Ovary (tissue), 10 donors: ENCODE measurements at regions of chr4 and their contacts with region 1.

Region 1: DNA sequence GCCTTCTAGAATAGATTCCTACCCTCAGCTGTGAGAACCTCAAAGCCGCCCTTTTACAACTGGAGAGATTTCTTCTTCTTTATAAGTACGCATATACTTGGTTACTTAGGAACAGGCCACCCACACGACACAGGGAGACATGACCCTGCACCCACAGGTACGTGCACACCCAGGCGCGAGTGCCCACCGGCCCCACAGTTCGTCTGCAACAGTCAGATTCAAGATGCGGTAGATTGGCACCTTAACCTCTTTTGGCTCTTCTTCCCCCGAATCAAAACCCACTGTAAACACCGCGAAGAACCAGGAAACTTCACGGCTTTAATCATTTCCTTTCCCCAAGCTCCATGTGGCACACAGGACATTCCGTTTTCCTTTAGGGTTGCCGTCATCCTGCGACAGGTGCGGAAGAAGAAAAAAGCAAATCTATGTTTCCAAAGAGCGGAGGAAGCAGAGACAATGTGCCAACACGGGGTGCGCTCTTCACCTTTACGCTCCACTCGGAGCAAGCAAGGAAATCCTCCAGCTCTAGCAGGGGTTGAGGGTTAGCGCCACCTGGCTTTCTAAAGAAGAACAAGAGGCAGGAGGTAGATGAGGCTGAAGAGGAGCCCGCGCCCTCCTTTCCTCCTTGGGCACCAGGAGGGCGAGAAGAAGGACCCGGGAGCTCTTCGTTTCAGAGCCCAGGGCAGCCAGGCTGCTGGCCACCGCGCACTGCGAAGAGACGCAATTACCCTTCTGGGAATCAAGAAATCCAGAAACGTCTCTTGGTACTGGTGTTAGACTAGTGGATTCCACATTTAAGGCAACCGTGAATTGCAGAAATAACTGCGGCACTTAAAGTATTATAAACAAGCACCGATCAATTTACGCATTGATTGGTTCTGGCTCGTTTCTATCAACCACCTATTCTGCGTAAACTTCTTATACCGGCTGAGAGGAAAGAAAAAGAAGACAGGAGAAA is 35.7 kb downstream of the HAND2 start:
- DNase-seq: peak in 4 of 5 donors; percentile 34 to 62 (median 51)
- H3K4me3 ChIP-seq: peak overlapping the region; percentile 41
- H3K27ac ChIP-seq: no peak overlapping the region
- H3K4me1 ChIP-seq: peaks cover 7% of the 10 kb centered on the region
- H3K27me3 ChIP-seq: no peaks in the 10 kb centered on the region
- CTCF ChIP-seq: peak; percentile 43 to 64 (median 49)
- EP300 ChIP-seq: no peak
- POLR2A ChIP-seq: no peak

Region 2: GRCh38 chr4:173413036-173413435 is 81.3 kb before region 1 on chr4:
- intact Hi-C with region 1: loop called in 2 of 4 experiments (anchors 5 to 10 kb)
- DNase-seq: no peak
- H3K4me3 ChIP-seq: no peak overlapping the region
- H3K27ac ChIP-seq: no peak overlapping the region
- H3K4me1 ChIP-seq: no peaks in the 10 kb centered on the region
- H3K27me3 ChIP-seq: no peaks in the 10 kb centered on the region
- CTCF ChIP-seq: no peak
- EP300 ChIP-seq: no peak
- POLR2A ChIP-seq: no peak

Region 3: DNA sequence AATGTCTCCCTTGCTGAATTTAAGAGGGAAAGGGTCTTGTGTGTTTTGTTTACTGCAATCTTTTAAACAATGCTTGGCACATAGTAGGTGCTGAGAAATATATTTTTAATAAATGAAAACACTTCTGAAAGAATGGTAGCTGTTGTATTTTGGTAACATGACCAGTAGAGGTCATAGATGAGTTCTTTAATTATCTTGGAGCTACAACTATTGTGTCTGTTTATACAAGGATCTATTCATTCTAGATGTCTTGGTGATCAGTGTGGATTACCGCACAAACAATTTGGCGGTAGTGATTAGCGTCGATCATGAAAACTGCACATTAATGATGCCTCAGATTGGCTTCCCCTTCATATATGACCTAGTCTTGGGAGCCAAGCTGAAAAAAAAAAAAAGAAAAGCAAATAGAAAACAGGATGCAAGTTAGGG is 74.0 kb before region 1 on chr4:
- intact Hi-C with region 1: loop called in 3 of 4 experiments (anchors 5 to 10 kb)
- DNase-seq: no peak
- H3K4me3 ChIP-seq: no peak overlapping the region
- H3K27ac ChIP-seq: no peak overlapping the region
- H3K4me1 ChIP-seq: no peaks in the 10 kb centered on the region
- H3K27me3 ChIP-seq: no peaks in the 10 kb centered on the region
- CTCF ChIP-seq: peak in 1 of 3 donors; percentile 31
- EP300 ChIP-seq: no peak
- POLR2A ChIP-seq: no peak

Region 4: DNA sequence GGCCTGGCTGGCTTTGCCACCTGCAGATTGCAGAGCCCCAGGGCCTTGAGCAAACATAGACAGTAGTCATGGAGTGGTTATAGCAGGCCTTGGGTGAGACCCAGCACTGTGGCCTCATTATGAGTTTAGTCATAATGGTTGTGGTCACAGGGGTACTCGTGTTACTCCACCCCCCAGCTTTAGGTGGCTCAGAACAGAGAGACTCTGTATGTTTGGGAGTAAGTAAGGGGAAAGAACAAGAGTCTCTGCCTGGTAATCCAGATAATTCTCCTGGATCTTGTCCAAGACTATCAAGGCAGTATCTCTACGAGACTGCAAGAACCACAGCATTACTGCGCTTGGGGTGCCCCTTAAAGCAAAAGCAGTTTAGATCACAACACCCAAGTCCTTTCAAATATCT is 33.1 kb before region 1 on chr4:
- intact Hi-C with region 1: no loop called
- DNase-seq: no peak
- H3K4me3 ChIP-seq: no peak overlapping the region
- H3K27ac ChIP-seq: no peak overlapping the region
- H3K4me1 ChIP-seq: no peaks in the 10 kb centered on the region
- H3K27me3 ChIP-seq: no peaks in the 10 kb centered on the region
- CTCF ChIP-seq: no peak
- EP300 ChIP-seq: no peak
- POLR2A ChIP-seq: no peak